Activated CD4-positive, alpha-beta T cell treated with anti-CD3 and anti-CD28 coated beads, Interleukin-2, amount 10 ng/mL, durations not matched to agents 24 days and 14 days (primary cell): ENCODE measurements at regions of chr2 and their contacts with region 1.

Region 1: DNA sequence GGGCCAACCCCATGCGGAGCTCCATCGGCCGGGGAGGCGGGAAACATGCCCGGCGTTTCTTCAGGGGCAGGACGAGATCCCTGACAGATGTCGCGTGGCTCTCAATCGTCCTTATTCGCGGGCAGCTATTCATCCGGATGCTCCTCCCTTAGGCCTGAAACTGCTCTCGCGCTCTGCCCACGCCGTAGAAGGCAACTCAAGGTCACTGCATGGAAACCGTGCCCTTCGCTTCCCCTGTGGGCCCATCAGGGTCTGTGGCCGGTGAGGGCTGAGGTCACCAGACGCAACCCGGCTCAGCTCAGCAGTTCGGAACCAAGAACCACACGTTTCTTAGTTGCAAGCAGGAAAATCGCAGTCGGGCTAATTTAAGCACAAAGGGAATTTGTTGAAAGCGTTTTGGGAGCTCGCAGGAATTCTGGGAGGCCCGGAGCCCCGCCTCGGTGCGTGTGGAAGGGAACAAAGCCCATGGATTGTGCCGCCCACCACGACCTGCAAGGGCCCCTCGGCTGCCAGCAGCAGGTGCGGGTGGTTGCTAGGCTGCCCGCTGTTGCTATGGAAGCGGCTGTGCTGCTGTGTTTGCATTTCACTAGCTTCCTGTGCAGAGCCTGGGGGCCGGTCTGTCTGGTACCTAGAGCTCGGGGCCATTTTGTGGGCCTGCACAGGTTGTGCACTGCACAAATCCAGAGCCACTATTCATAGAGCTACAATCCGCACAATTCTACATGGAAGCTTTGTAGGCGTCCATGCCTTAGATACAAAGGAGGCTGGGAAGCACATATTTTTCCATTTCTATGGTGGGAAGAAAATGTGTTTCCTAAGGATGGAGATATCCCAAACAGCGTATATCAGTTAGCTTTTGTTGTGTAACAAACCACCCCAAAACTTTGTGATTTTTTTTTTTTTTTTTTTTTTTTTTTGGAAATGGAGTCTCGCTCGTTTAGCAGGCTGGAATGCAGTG is 6.0 kb upstream of the ALLC start:
- DNase-seq: peak; percentile 91
- H3K4me3 Mint-ChIP-seq: peak overlapping the region; percentile 86
- H3K27ac Mint-ChIP-seq: peak overlapping the region; percentile 94
- H3K4me1 Mint-ChIP-seq: peaks cover 12% of the 10 kb centered on the region
- H3K27me3 Mint-ChIP-seq: peaks cover 4% of the 10 kb centered on the region

Region 2: DNA sequence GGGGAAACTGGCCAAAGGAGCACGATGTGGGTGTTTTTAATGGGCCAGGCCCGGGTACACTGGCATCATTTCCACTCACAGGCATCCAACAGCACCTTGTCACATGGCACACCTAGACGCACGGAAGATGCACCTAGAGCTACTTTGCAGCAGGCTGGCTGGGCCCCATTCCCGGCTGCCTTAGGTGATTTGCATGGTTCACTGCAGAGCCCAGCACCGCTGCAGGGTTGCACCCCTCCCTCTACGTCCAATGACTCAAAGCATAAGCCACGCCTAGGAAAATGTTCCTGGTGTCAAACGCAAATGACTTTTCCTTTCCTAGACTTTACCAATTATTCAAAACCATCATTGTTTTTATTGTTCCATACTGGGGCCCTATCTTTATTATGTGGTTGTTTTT is 497.3 kb before region 1 on chr2:
- intact Hi-C with region 1: no loop called
- DNase-seq: no peak
- H3K4me3 Mint-ChIP-seq: no peak overlapping the region
- H3K27ac Mint-ChIP-seq: no peak overlapping the region
- H3K4me1 Mint-ChIP-seq: no peaks in the 10 kb centered on the region
- H3K27me3 Mint-ChIP-seq: no peaks in the 10 kb centered on the region

Region 3: GRCh38 chr2:3223080-3223923 is 428.7 kb before region 1 on chr2:
- intact Hi-C with region 1: loop called (anchors 2 kb)
- DNase-seq: peak; percentile 91
- H3K4me3 Mint-ChIP-seq: peak overlapping the region; percentile 52
- H3K27ac Mint-ChIP-seq: peak overlapping the region; percentile 94
- H3K4me1 Mint-ChIP-seq: peaks cover 42% of the 10 kb centered on the region
- H3K27me3 Mint-ChIP-seq: no peaks in the 10 kb centered on the region

Region 4: DNA sequence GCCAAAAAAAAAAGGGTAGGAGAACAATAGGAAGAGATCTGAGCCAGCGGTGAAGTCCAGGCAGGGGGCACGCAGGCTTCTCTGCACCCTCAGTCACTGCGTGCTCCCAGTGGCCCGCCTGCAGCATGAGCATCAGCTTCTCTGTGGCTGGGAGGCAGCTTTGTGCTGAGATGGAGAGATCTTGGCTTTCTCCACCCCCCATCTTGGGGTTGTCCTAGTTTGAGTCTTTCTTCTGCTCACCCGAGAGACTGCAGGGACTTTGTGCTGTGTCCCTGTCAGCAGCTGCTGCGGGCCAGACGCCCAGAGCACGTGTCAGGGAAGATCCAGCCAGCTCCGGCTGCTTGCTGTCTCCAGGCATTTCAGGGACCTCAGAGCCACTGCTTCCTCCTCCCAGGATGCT is 252.1 kb before region 1 on chr2:
- intact Hi-C with region 1: no loop called
- DNase-seq: no peak
- H3K4me3 Mint-ChIP-seq: no peak overlapping the region
- H3K27ac Mint-ChIP-seq: no peak overlapping the region
- H3K4me1 Mint-ChIP-seq: peaks cover 2% of the 10 kb centered on the region
- H3K27me3 Mint-ChIP-seq: no peaks in the 10 kb centered on the region

Region 5: DNA sequence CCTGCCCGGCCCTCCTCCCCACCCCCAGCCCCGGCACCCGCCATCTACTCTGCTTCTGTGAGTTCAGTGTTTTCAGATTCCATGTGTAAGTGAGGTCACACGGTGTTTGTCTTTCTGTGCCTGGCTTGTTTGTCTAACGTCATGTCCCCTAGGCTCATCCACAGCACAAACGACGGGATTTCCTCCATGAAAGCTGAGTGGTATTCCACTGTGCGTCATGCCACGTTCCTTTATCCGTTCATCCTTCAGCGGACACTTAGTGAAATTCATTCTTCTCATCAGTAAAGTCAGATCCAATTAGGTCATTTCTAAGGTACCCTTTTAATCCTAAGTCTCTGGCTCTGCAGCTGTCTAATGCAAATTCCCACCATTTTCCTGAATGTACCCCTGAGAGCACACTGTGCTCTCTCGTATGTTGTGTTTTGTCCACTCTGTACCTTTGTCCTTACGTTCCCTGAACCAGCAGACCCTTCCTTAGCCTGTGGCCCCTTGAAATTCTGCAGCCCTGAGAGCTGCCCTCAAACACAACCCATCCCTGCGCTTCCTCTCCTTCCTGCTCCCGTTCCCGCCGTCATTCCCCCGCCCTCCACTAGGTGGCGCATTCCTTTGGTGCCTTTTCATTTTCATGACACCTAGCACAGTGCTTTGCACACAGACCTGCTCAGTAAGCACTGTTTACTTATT is 228.3 kb before region 1 on chr2:
- intact Hi-C with region 1: loop called (anchors 1 kb)
- DNase-seq: peak; percentile 93
- H3K4me3 Mint-ChIP-seq: no peak overlapping the region
- H3K27ac Mint-ChIP-seq: no peak overlapping the region
- H3K4me1 Mint-ChIP-seq: peaks cover 2% of the 10 kb centered on the region
- H3K27me3 Mint-ChIP-seq: no peaks in the 10 kb centered on the region

Region 6: GRCh38 chr2:3518496-3519254 is 133.3 kb before region 1 on chr2:
- intact Hi-C with region 1: loop called (anchors 1 kb)
- DNase-seq: peak; percentile 99
- H3K4me3 Mint-ChIP-seq: peak overlapping the region; percentile 86
- H3K27ac Mint-ChIP-seq: peak overlapping the region; percentile 82
- H3K4me1 Mint-ChIP-seq: peaks cover 33% of the 10 kb centered on the region
- H3K27me3 Mint-ChIP-seq: no peaks in the 10 kb centered on the region

Region 7: DNA sequence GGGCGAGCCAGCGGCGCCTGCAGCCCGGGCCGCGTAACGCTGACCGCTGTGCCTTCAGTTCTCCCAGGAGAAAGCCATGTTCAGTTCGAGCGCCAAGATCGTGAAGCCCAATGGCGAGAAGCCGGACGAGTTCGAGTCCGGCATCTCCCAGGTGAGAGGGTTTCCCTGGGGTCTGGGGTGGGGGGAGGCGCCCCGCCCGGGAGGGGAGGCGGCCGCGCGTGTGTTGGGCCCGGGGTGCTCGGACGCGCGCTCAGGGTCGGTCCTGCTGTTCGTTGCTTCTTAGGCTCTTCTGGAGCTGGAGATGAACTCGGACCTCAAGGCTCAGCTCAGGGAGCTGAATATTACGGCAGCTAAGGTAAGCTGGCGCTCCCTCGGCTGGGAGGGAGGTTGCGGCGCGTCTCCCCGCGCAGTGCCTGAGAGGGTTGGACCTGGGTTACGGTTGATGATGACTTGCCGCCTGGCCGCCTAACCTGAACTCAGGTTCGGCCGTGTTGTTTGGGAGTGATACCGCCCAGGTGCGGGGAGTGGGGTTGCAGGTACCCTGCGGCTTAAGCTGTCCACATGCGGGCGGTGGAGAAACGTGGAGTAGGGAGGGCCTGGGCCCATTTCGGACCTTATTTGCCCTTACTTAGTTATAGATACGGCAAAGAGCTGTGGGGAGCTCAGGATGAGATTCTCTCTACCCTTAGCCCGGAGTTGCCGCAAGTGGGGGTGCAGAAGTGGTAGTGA is 76.3 kb before region 1 on chr2:
- intact Hi-C with region 1: loop called (anchors 1 kb)
- DNase-seq: peak; percentile 78
- H3K4me3 Mint-ChIP-seq: peak overlapping the region; percentile 92
- H3K27ac Mint-ChIP-seq: peak overlapping the region; percentile 84
- H3K4me1 Mint-ChIP-seq: peaks cover 45% of the 10 kb centered on the region
- H3K27me3 Mint-ChIP-seq: no peaks in the 10 kb centered on the region

Region 8: GRCh38 chr2:3604991-3605961 is 46.7 kb before region 1 on chr2:
- intact Hi-C with region 1: no loop called
- DNase-seq: peak; percentile 72
- H3K4me3 Mint-ChIP-seq: peak overlapping the region; percentile 56
- H3K27ac Mint-ChIP-seq: peak overlapping the region; percentile 80
- H3K4me1 Mint-ChIP-seq: peaks cover 4% of the 10 kb centered on the region
- H3K27me3 Mint-ChIP-seq: no peaks in the 10 kb centered on the region